Activated CD8-positive, alpha-beta T cell treated with anti-CD3 and anti-CD28 coated beads for 36 hours (primary cell): ENCODE measurements at regions of chr3 and their contacts with region 1.

Region 1: GRCh38 chr3:195909644-195910508 is 1.5 kb upstream of the TNK2 start:
- DNase-seq: peak; percentile 88
- ATAC-seq: peak; percentile 72
- H3K4me3 Mint-ChIP-seq: peak overlapping the region; percentile 69
- H3K27ac Mint-ChIP-seq: peak overlapping the region; percentile 75
- H3K4me1 Mint-ChIP-seq: peaks cover 45% of the 10 kb centered on the region
- H3K27me3 Mint-ChIP-seq: no peaks in the 10 kb centered on the region
- CTCF ChIP-seq: no peak

Region 2: DNA sequence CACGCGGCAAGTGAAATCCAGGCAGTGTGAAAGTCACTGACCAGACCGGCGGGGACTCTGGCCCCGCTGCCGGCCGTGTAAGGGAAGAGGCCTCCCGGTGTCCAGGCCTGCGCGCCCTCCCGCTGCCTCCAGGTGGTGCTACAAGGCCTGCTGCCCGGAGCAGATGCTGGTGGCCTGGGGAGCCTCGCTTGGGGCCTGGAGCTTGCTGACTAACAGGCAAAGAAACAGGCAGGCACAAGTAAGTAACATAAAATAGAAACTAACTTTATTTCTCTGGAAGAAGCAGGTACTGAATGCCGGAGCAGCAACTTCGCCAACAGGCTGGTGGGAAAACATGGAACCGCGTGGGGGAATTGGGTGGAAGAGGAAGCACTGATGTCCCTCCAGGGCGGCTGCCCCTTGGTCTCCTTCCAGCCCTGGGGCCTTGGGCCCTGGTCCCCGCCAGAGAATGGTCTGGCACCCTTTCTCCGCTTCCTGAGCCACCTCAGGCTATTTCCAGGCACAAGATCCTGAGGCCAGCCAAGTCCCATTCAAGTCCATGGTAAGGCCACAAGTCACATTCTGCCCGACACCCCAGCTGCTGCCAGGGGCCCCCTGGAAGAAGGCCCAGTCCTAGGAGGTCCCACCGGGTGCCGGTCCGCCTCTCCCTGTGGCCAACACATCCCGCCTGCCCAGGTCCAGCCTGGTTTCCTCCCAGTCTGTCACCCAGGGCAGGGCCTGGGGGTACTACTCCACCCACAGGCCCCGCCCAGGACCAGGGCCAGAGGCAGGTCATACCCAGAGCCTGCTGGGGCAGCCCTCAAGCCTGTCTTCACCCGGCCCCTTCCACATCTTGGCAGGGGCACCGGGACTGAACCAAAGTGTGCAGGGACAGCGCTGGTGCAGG is 46.5 kb before region 1 on chr3:
- CTCF ChIA-PET with region 1: interaction called, 155 read pairs
- POLR2A ChIA-PET with region 1: interaction called, 4 read pairs
- intact Hi-C with region 1: loop called (anchors 1 kb)
- DNase-seq: peak; percentile 85
- ATAC-seq: peak; percentile 87
- H3K4me3 Mint-ChIP-seq: no peak overlapping the region
- H3K27ac Mint-ChIP-seq: no peak overlapping the region
- H3K4me1 Mint-ChIP-seq: peaks cover 12% of the 10 kb centered on the region
- H3K27me3 Mint-ChIP-seq: no peaks in the 10 kb centered on the region
- CTCF ChIP-seq: peak; percentile 89

Region 3: DNA sequence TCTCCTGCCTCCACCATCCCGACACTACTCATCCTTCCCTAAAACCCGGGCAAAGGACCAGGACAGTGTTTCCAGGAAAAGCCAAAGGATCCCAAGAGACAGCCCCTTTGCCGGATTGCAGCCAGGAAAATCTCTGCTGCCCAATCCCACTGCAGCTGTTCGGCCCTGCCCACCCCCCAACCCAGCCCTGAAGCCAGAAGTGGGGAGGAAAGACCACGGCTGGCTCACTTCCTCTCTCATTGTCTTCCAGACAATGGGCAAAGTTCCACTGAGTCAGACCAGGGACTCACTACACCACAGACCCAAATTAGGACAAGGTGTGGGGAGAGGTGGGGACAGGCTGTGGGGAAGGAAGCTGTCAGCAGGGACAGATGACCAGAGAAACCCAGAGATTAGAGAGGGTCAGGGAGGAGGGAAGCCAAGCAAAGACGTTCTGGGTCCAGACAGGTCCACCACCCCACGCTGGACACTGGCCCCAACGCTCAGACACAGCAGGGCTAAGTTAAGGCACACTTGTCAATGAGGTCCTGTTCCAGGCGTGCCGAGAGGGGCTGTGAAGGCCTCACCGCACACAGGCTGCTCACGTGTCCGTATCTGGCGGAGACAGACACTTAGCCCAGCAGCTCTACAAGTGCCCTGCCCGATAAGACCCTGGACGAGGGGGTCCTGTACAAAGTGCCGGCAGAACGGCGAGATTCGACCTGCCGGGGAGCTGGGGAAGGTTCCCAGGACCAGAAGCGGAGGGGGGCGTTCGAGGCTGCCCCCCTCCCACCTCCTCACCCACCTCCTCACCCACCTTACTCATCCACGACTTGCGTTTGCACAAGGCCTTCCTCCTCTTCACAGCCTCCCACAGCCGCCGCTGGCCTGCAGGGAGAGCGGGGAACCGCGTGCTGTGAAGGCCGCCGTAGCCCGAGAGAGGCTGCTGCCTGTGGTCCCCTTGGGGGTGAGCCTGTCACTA is 23.4 kb before region 1 on chr3:
- CTCF ChIA-PET with region 1: interaction called, 119 read pairs
- POLR2A ChIA-PET with region 1: interaction called, 6 read pairs
- intact Hi-C with region 1: no loop called
- DNase-seq: no peak
- ATAC-seq: no peak
- H3K4me3 Mint-ChIP-seq: no peak overlapping the region
- H3K27ac Mint-ChIP-seq: no peak overlapping the region
- H3K4me1 Mint-ChIP-seq: no peaks in the 10 kb centered on the region
- H3K27me3 Mint-ChIP-seq: no peaks in the 10 kb centered on the region
- CTCF ChIP-seq: no peak

Region 4: GRCh38 chr3:195894780-195895607 is 14.9 kb before region 1 on chr3:
- CTCF ChIA-PET with region 1: interaction called, 119 read pairs
- POLR2A ChIA-PET with region 1: interaction called, 77 read pairs
- intact Hi-C with region 1: no loop called
- DNase-seq: peak; percentile 87
- ATAC-seq: peak; percentile 80
- H3K4me3 Mint-ChIP-seq: peak overlapping the region; percentile 80
- H3K27ac Mint-ChIP-seq: peak overlapping the region; percentile 85
- H3K4me1 Mint-ChIP-seq: peaks cover 38% of the 10 kb centered on the region
- H3K27me3 Mint-ChIP-seq: no peaks in the 10 kb centered on the region
- CTCF ChIP-seq: peak; percentile 92